PC-3 (cell line): ENCODE measurements at regions of chr4 and their contacts with region 1.

Region 1: GRCh38 chr4:56958111-56958517 is 19.3 kb downstream of the NOA1 start:
- DNase-seq: peak; percentile 78
- ATAC-seq: peak; percentile 86
- H3K4me3 ChIP-seq: peak overlapping the region; percentile 5; the same call in 1 of the 2 replicates
- H3K27ac ChIP-seq: no peak overlapping the region
- H3K4me1 ChIP-seq: peaks cover 7% of the 10 kb centered on the region; the same call in 1 of the 2 replicates
- H3K27me3 ChIP-seq: no peaks in the 10 kb centered on the region
- CTCF ChIP-seq: no peak

Region 2: DNA sequence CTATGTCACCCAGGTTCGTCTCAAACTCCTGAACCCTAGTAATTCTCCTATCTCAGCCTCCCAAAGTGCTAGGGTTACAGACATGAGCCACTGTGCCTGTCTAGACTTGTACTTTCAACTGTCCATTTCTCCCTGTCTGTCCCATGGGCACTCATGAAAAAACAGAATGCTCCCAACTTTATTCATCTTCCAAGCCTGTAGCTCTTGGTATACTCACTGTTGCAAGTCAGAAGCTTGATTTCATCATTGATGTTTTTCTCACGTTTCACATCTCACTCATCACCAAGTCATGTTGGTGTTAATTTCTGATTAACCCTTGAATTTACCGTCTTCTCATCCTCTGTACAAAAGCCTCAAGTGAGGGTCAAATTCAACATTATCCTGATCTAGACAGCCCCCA is 498.0 kb before region 1 on chr4:
- CTCF ChIA-PET with region 1: no interaction called
- POLR2A ChIA-PET with region 1: interaction called, 22 read pairs
- intact Hi-C with region 1: no loop called
- DNase-seq: no peak
- ATAC-seq: no peak
- H3K4me3 ChIP-seq: no peak overlapping the region
- H3K27ac ChIP-seq: no peak overlapping the region
- H3K4me1 ChIP-seq: no peaks in the 10 kb centered on the region
- H3K27me3 ChIP-seq: no peaks in the 10 kb centered on the region
- CTCF ChIP-seq: no peak

Region 3: DNA sequence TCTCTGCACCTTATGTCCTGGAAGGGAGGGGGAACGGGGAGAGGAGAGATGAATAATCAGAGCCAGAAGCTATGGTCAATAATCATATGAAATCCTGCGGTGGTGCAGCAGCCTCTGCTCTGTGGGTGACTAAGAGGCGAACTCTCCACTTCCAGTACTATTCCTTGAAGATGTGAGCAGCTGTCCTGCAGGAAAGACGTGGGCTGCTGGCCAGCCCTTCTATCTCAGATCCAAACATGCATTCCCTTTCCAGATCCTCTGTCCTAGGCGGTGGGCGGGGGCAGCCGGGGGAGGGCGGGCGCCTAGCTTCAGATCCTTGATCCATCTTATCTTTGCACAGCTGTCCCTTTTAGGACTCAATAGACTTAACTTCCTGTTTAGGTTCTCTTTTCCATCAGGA is 171.2 kb before region 1 on chr4:
- CTCF ChIA-PET with region 1: no interaction called
- POLR2A ChIA-PET with region 1: no interaction called
- intact Hi-C with region 1: no loop called
- DNase-seq: peak; percentile 59
- ATAC-seq: peak; percentile 66
- H3K4me3 ChIP-seq: no peak overlapping the region
- H3K27ac ChIP-seq: no peak overlapping the region
- H3K4me1 ChIP-seq: peaks cover 4% of the 10 kb centered on the region; the same call in 1 of the 2 replicates
- H3K27me3 ChIP-seq: no peaks in the 10 kb centered on the region
- CTCF ChIP-seq: no peak

Region 4: DNA sequence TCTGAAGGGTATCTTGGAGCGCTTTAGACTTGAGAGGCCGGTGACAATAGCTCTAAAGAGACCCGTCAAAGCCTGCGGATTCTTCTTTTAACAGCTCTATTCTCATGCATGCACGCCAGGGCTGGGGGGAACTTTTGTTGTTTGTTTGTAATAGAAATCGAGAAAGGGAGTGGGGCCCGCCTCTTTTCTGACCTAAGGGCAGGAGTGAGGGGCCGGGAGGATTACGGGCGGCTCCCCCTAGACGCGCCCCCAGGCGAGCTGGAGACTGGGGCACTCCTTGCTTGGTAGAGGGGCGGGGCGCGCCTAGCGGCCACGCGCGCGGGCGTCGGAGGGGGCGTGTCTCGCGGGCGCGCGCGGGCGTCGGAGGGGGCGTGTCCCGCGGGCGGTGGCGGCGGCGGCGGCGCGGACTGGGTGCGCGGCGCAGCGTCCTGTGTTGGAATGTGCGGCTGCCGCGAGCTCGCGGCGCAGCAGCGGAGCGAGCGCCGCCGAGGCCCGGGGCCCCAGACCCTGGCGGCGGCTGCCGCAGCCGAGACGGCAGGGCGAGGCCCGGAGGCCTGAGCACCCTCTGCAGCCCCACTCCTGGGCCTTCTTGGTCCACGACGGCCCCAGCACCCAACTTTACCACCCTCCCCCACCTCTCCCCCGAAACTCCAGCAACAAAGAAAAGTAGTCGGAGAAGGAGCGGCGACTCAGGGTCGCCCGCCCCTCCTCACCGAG is 50.5 kb before region 1 on chr4 and contains the start of gene REST:
- CTCF ChIA-PET with region 1: no interaction called
- POLR2A ChIA-PET with region 1: interaction called, 3 read pairs
- intact Hi-C with region 1: loop called (anchors 1 kb)
- DNase-seq: peak; percentile 79
- ATAC-seq: peak; percentile 68
- H3K4me3 ChIP-seq: peak within 1 kb of the TSS; percentile 89
- H3K27ac ChIP-seq: no peak within 1 kb of the TSS
- H3K4me1 ChIP-seq: peaks cover 20% of the 10 kb centered on the region
- H3K27me3 ChIP-seq: no peaks in the 10 kb centered on the region
- CTCF ChIP-seq: no peak
- total RNA-seq, gene REST: 21.7 and 22.4 TPM in 2 replicates